ENCODE measurements at regions of chr17 and their contacts with region 1.

Region 1: GRCh38 chr17:47840740-47841603 is at the start of gene SCRN2:
- DNase-seq: peak; percentile 91
- ATAC-seq: peak; percentile 84 to 94
- total RNA-seq, gene SCRN2: 32.2 to 33.6 TPM

Region 2: DNA sequence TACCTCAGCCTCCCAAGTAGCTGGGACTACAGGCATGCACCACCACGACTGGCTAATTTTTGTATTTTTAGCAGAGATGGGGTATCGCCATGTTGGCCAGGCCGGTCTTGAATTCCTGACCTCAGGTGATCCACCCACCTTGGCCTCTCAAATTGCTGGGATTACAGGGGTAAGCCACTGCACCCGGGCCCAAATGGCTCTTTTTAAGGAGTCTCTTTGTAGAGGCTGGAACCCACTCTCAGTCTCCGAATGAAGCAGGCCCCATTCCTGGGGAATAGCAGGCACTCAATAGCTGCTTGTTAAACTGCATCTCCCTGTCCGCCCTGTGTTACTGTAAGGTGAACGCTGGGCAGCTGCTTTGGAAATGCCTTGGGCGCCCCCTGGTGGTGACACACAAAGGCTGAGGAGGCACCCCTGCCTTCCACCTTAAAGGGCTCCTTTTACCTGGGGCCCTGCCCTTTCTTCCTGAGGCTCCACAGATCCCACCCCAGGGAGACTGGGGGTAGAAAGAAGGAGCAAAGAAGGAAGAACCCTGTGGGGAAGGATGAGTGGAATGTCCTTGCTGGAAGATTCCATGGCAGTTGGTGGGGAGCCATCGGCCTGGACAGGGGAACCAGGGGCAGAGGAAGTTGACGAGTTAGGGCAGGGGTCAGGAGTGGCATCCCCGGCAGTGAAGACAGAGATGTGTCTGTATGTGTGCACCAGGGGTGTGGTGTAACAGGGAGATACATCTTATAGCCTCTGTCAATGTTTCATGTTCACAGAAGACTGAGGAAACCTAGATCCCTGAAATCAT is 49.0 kb after region 1 on chr17:
- intact Hi-C with region 1: loop called (anchors 1 to 2 kb)
- DNase-seq: peak; percentile 90
- ATAC-seq: peak; percentile 92 to 93

Region 3: DNA sequence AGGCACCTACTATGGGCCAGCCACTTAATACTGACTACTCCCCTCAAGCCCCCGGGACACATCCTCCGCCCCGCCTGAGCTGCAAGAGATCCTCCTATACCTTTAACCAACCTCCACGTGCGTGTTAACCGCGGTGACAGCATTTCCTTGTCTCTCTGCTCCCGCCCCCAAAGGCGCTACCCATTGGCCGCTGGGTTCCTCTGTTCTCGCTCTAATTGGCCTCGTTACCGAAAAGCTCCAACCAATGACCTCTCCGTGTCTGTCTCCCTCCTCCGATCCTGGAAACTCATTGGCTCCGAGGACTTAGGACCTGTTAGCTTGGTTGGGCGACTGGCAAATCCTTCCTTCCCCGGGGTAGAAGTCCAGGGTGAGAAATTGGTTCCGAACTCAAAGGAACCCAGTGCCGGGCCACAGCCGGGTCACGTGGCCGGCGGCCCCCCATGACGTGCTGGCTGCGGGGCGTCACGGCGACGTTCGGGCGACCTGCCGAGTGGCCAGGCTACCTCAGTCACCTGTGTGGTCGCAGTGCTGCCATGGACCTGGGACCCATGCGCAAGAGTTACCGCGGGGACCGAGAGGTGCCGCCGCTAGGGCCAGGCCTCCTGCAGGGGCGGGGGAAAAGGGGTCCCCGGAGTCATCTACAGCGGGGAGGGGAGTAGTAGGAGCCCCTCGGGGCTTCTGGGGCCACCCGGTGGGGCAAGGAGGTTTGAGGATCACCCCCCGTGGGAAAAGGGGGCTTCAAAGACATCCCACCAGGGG is 100.4 kb after region 1 on chr17 and contains the start of gene PNPO:
- intact Hi-C with region 1: loop called (anchors 5 to 10 kb)
- DNase-seq: peak; percentile 96
- ATAC-seq: peak; percentile 98
- total RNA-seq, gene PNPO: 23.4 to 25.4 TPM

Region 4: DNA sequence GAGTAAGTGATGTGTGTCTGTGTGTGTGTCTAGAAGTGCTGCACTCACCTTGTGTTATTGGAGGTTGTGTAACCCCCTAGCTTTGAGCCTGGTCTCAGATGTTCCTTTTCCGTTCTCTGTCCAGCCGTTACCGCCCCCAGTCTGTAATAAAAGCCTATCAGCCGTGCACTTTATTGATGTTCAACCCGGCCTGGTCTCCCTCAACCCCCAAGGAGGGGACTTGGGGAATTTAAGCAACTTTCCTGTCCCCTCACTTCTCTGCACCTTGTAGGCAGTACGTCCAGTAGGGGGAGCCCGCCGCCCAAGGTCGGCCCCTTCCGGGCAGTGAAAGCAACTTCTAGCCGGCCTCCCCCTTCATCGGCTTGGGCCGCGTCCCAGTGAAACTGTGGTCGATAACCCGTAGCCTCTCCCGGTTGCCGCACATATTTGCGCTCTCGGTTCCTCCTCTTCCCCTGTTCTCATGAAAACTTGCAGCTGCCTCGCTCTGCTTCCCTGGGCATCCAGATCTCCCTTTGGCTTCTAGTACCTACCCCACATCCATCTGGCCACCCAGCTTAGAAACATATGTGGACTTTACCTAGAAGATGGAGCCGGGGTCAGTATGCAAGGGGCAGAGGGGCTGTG is 108.3 kb after region 1 on chr17:
- intact Hi-C with region 1: loop called (anchors 5 to 10 kb)
- DNase-seq: peak; percentile 93
- ATAC-seq: peak; percentile 83 to 92

Region 5: GRCh38 chr17:47970704-47971463 is 129.9 kb after region 1 on chr17 and contains the start of gene CDK5RAP3:
- intact Hi-C with region 1: loop called (anchors 2 kb)
- DNase-seq: peak; percentile 100
- ATAC-seq: peak; percentile 99 to 100
- total RNA-seq, gene CDK5RAP3: 62.6 to 66.3 TPM

Measured in left cardiac atrium (tissue), 4 donors.